Pancreas (tissue), 10 donors: ENCODE measurements at regions of chr7 and their contacts with region 1.

Region 1: DNA sequence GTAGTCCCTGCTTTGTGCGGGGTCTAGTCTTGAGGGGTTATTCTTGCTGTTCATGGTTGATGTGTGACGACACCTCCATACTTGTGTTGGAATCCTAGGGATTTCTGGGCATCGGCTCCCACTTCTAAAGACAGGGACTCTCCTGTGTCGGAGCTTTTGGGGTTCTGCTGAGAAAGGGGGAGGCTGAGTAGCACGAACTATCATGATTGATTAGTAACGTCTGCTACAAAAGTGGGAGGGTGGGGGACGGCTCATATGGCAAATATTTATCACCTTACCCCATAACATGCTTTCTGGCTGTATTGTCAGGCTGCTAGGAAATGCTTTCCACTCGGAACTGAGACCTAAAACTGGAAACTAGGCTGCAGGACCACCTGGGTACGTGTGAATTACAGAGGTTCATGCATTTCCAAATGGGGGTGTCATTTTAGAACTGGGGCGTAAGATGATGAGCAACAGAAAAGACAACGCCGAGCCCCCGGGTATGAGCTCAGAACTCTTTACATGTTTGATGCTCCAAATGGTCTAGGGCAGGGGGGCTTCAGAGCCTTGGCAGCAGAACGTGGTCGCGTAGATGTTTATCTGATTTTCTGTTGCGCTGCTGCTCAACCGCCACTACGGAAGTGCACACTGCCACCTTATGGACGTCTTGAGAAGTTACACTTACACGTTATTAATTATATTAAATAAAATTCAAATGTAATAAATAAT is 15.1 kb upstream of the NME8 start:
- DNase-seq: peak in 3 of 6 donors; percentile 33 to 40 (median 37)
- ATAC-seq: peak in 3 of 4 donors; percentile 74 to 79 (median 78)
- H3K4me3 ChIP-seq: no peak overlapping the region
- H3K27ac ChIP-seq: no peak overlapping the region
- H3K4me1 ChIP-seq: peaks cover 0 to 4% (median 0%) of the 10 kb centered on the region in 3 donors
- H3K27me3 ChIP-seq: peaks cover 0 to 8% (median 0%) of the 10 kb centered on the region in 4 donors
- CTCF ChIP-seq: peak in 3 of 4 donors; percentile 45 to 60 (median 52)

Region 2: DNA sequence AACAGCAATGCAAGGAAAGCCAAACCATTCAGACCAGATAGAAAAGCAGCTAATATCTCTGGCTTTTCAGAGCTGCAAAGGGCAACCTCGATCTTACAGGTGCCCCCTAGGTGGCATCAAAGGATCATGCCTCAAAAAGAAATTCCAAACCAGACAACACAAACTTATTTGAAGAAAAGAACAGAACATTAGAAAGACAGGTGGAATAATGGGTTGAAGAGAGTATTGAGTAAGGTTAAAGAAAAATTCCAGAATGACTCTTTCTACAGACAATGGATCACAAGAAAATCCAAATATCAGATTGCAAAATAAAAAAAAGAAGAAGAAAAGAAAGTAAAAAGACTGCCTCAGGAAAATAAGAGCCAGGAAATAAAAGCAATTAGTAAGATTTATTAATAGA is 598.3 kb before region 1 on chr7:
- intact Hi-C with region 1: loop called in 1 of 3 experiments (anchors 10 kb)
- DNase-seq: no peak
- ATAC-seq: peak in 3 of 4 donors; percentile 38 to 65 (median 51)
- H3K4me3 ChIP-seq: no peak overlapping the region
- H3K27ac ChIP-seq: no peak overlapping the region
- H3K4me1 ChIP-seq: no peaks in the 10 kb centered on the region
- H3K27me3 ChIP-seq: no peaks in the 10 kb centered on the region
- CTCF ChIP-seq: peak in 3 of 4 donors; percentile 10 to 38 (median 31)

Region 3: DNA sequence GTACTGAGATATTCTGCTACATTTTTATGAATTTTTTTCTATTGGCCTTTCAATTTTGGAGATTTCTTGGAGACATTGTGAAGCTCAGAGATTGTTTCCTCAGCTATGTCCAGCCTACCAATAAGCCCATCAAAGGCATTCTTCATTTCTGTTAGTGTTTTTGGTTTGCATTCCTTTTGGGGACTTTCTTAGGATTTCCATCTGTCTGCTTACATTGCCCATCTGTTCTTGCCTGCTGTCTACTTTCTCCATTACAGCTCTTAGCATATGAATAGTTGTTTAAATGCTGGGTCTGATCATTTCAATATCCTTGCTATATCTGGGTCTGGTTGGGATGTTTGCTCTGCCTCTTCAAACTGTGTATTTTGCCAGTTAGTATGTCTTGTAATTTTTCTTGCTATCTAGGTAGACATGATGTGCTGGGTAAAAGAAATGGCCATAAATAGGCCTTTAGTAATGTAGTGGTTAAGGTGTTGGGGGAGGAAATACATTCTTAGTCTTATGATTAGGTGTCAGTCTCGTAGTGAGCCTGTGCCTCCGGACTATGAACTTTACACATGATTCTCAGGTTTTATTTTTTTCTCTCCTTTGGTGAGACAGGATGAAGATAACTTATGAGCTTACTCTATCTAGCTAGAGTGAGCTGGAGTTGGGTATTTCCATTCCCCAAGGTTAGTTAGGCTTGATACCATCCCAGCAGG is 17.4 kb before region 1 on chr7:
- intact Hi-C with region 1: no loop called
- DNase-seq: no peak
- ATAC-seq: no peak
- H3K4me3 ChIP-seq: no peak overlapping the region
- H3K27ac ChIP-seq: no peak overlapping the region
- H3K4me1 ChIP-seq: no peaks in the 10 kb centered on the region
- H3K27me3 ChIP-seq: no peaks in the 10 kb centered on the region
- CTCF ChIP-seq: no peak

Region 4: GRCh38 chr7:37933018-37933566 is 99.8 kb after region 1 on chr7:
- intact Hi-C with region 1: no loop called
- DNase-seq: no peak
- ATAC-seq: peak in 2 of 4 donors; percentile 30 to 57
- H3K4me3 ChIP-seq: no peak overlapping the region
- H3K27ac ChIP-seq: no peak overlapping the region
- H3K4me1 ChIP-seq: peaks cover 0 to 5% (median 0%) of the 10 kb centered on the region in 3 donors
- H3K27me3 ChIP-seq: no peaks in the 10 kb centered on the region
- CTCF ChIP-seq: no peak

Region 5: GRCh38 chr7:38112075-38112474 is 278.8 kb after region 1 on chr7:
- intact Hi-C with region 1: no loop called
- DNase-seq: no peak
- ATAC-seq: no peak
- H3K4me3 ChIP-seq: no peak overlapping the region
- H3K27ac ChIP-seq: no peak overlapping the region
- H3K4me1 ChIP-seq: no peaks in the 10 kb centered on the region
- H3K27me3 ChIP-seq: no peaks in the 10 kb centered on the region
- CTCF ChIP-seq: no peak